Esophagus squamous epithelium (tissue), 5 donors: ENCODE measurements at regions of chr12 and their contacts with region 1.

Region 1: DNA sequence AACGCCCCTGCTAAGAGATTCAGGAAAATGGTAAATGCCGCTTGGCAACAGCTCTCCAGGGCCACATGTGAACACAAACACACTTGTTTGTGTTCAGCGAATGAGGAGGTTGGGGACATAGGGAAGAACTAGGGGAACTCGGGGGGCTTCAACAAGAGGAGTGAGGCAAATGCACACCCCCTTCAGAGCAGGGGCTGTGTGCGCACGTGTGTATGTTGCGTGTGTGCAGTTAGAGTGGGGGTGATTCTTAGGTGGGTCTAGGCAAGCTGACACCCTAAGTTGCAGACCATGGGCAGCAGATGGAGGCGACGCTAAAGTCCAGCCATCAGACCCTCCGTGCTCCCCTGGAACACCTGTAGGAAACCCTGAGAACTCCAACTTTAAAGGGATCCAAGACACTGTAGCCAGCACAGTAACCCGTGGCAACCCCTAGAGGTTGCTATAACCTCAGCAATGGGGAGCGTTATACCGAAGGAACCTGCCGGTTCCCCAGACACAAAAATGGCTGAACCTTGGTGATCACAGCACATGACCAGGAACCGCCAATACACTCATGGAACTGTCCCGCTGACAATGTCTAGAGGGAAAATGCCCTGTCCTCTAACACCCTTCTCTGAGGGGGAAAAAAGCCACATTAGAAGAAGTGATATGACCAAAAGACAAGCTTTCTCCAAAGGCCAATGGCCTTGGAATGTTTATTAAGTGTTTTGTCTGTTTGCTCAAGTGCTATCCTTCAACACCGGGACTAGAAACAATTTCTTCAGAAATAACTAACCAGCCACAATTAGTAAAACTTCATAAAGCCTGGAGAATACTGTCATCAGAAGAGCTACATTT is 86.5 kb upstream of the CEP83 start:
- DNase-seq: no peak
- H3K4me3 ChIP-seq: no peak overlapping the region
- H3K27ac ChIP-seq: no peak overlapping the region
- H3K4me1 ChIP-seq: peaks cover 0 to 5% (median 0%) of the 10 kb centered on the region in 3 donors
- H3K27me3 ChIP-seq: no peaks in the 10 kb centered on the region
- CTCF ChIP-seq: peak in 5 of 6 experiments; percentile 68 to 91 (median 73)
- POLR2A ChIP-seq: no peak

Region 2: GRCh38 chr12:94762259-94762942 is 216.2 kb after region 1 on chr12:
- intact Hi-C with region 1: loop called (anchors 10 kb)
- DNase-seq: no peak
- H3K4me3 ChIP-seq: no peak overlapping the region
- H3K27ac ChIP-seq: no peak overlapping the region
- H3K4me1 ChIP-seq: no peaks in the 10 kb centered on the region
- H3K27me3 ChIP-seq: no peaks in the 10 kb centered on the region
- CTCF ChIP-seq: no peak
- POLR2A ChIP-seq: no peak

Region 3: GRCh38 chr12:94875525-94875924 is 329.4 kb after region 1 on chr12:
- intact Hi-C with region 1: loop called (anchors 10 kb)
- DNase-seq: no peak
- H3K4me3 ChIP-seq: no peak overlapping the region
- H3K27ac ChIP-seq: no peak overlapping the region
- H3K4me1 ChIP-seq: peaks cover 10 to 39% (median 18%) of the 10 kb centered on the region in 3 donors
- H3K27me3 ChIP-seq: peaks cover 3 to 68% (median 12%) of the 10 kb centered on the region in 4 donors
- CTCF ChIP-seq: peak in 4 of 6 experiments; percentile 16 to 46 (median 24)
- POLR2A ChIP-seq: no peak

Region 4: GRCh38 chr12:95022477-95022876 is 476.3 kb after region 1 on chr12:
- intact Hi-C with region 1: no loop called
- DNase-seq: no peak
- H3K4me3 ChIP-seq: no peak overlapping the region
- H3K27ac ChIP-seq: no peak overlapping the region
- H3K4me1 ChIP-seq: no peaks in the 10 kb centered on the region
- H3K27me3 ChIP-seq: no peaks in the 10 kb centered on the region
- CTCF ChIP-seq: no peak
- POLR2A ChIP-seq: no peak